Activated CD4-positive, alpha-beta memory T cell treated with anti-CD3 and anti-CD28 coated beads for 36 hours (primary cell): ENCODE measurements at regions of chr20 and their contacts with region 1.

Region 1: GRCh38 chr20:16544949-16545348 is 28.3 kb downstream of the KIF16B start:
- DNase-seq: peak; percentile 64
- H3K4me3 Mint-ChIP-seq: no peak overlapping the region
- H3K27ac Mint-ChIP-seq: no peak overlapping the region
- H3K4me1 Mint-ChIP-seq: peaks cover 16% of the 10 kb centered on the region
- H3K27me3 Mint-ChIP-seq: no peaks in the 10 kb centered on the region

Region 2: DNA sequence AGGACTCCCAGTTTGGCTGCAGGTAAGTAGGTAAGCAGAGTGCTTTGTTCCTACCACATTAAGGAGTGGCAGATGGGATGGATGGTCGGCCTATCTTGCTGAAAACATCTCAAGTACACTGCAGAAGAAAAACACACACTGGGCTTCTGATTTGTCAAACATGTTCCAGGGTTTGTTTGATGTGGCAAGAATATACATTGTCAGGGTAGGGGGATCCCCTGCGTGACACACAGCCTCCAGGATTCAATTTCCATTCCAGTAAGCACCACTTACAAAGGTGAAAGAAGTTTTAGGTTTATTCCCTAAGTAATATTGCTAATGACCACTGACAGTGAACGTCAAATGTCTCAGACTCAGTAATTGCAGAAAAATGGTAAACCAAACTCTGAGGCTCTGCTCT is 54.3 kb after region 1 on chr20:
- CTCF ChIA-PET with region 1: no interaction called
- POLR2A ChIA-PET with region 1: no interaction called
- intact Hi-C with region 1: loop called (anchors 1 kb)
- DNase-seq: peak; percentile 53
- H3K4me3 Mint-ChIP-seq: no peak overlapping the region
- H3K27ac Mint-ChIP-seq: no peak overlapping the region
- H3K4me1 Mint-ChIP-seq: peaks cover 5% of the 10 kb centered on the region
- H3K27me3 Mint-ChIP-seq: peaks cover 9% of the 10 kb centered on the region

Region 3: GRCh38 chr20:16828666-16829305 is 283.8 kb after region 1 on chr20:
- CTCF ChIA-PET with region 1: no interaction called
- POLR2A ChIA-PET with region 1: no interaction called
- intact Hi-C with region 1: no loop called
- DNase-seq: no peak
- H3K4me3 Mint-ChIP-seq: no peak overlapping the region
- H3K27ac Mint-ChIP-seq: no peak overlapping the region
- H3K4me1 Mint-ChIP-seq: no peaks in the 10 kb centered on the region
- H3K27me3 Mint-ChIP-seq: peaks cover 6% of the 10 kb centered on the region